Naive thymus-derived CD4-positive, alpha-beta T cell (primary cell): ENCODE measurements at regions of chr5 and their contacts with region 1.

Region 1: DNA sequence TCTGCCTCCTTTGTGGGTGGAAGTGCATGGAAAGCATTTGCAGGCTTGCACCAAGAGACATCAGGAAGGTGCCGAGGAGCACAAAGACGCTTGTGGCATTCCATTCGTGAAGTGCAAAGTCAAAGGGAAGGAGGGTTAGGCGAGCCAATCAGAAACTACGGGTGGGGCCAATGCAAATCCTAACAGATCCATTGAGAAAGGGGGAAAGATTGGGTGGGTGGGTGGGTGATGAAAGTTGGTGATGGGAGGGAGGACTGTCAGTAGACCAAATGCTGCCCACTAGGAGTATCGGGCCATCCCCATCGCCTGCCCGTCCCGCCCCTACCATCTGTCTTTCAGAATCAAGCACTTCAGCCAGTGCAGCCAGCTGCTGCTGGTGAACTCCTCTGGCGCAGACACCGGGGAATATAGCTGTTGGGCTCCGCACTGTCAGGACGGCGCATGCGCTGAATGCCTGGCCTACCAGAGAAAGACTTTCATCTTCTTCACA is 17.1 kb upstream of the ANXA6 start:
- DNase-seq: no peak
- ATAC-seq: no peak
- H3K4me3 ChIP-seq: no peak overlapping the region
- H3K4me3 Mint-ChIP-seq: no peak overlapping the region
- H3K27ac ChIP-seq: no peak overlapping the region
- H3K27ac Mint-ChIP-seq: peak overlapping the region in 7 of 9 donors; percentile 12 to 78 (median 55)
- H3K4me1 ChIP-seq: peaks cover 0 to 6% of the 10 kb centered on the region in 2 donors
- H3K4me1 Mint-ChIP-seq: peaks cover 11 to 52% (median 26%) of the 10 kb centered on the region in 7 donors
- H3K27me3 ChIP-seq: no peaks in the 10 kb centered on the region
- H3K27me3 Mint-ChIP-seq: no peaks in the 10 kb centered on the region

Region 2: GRCh38 chr5:151191659-151192058 is 17.0 kb after region 1 on chr5:
- CTCF ChIA-PET with region 1: interaction called, 3 read pairs
- POLR2A ChIA-PET with region 1: no interaction called
- intact Hi-C with region 1: loop called in 1 of 2 experiments (anchors 2 kb)
- DNase-seq: no peak
- ATAC-seq: no peak
- H3K4me3 ChIP-seq: no peak overlapping the region
- H3K4me3 Mint-ChIP-seq: peak overlapping the region in 4 of 10 donors; percentile 16 to 60 (median 34)
- H3K27ac ChIP-seq: no peak overlapping the region
- H3K27ac Mint-ChIP-seq: peak overlapping the region in 4 of 9 donors; percentile 13 to 76 (median 40)
- H3K4me1 ChIP-seq: peaks cover 16 to 19% of the 10 kb centered on the region in 2 donors
- H3K4me1 Mint-ChIP-seq: peaks cover 23 to 82% (median 73%) of the 10 kb centered on the region in 7 donors
- H3K27me3 ChIP-seq: no peaks in the 10 kb centered on the region
- H3K27me3 Mint-ChIP-seq: no peaks in the 10 kb centered on the region

Region 3: GRCh38 chr5:151252762-151253604 is 78.3 kb after region 1 on chr5 and contains the start of gene GM2A:
- CTCF ChIA-PET with region 1: no interaction called
- POLR2A ChIA-PET with region 1: no interaction called
- intact Hi-C with region 1: no loop called
- DNase-seq: peak; percentile 91 to 98 (median 96)
- ATAC-seq: peak; percentile 97
- H3K4me3 ChIP-seq: peak within 1 kb of the TSS; percentile 93
- H3K4me3 Mint-ChIP-seq: peak within 1 kb of the TSS; percentile 82 to 97 (median 94)
- H3K27ac ChIP-seq: peak within 1 kb of the TSS; percentile 78
- H3K27ac Mint-ChIP-seq: peak within 1 kb of the TSS; percentile 74 to 96 (median 95)
- H3K4me1 ChIP-seq: peaks cover 11 to 21% of the 10 kb centered on the region in 2 donors
- H3K4me1 Mint-ChIP-seq: peaks cover 30 to 50% (median 47%) of the 10 kb centered on the region in 7 donors
- H3K27me3 ChIP-seq: no peaks in the 10 kb centered on the region
- H3K27me3 Mint-ChIP-seq: no peaks in the 10 kb centered on the region
- total RNA-seq, gene GM2A: 11.1 to 45.6 (median 16.9) TPM